ENCODE measurements at regions of chr2 and their contacts with region 1.

Region 1: GRCh38 chr2:172806493-172806892 is 70.8 kb downstream of the RAPGEF4 start:
- DNase-seq: peak; percentile 68
- ATAC-seq: peak; percentile 85
- H3K4me3 ChIP-seq: no peak overlapping the region
- H3K27ac ChIP-seq: no peak overlapping the region
- H3K4me1 ChIP-seq: no peaks in the 10 kb centered on the region
- H3K27me3 ChIP-seq: no peaks in the 10 kb centered on the region
- CTCF ChIP-seq: peak; percentile 92
- POLR2A ChIP-seq: peak; percentile 53; the same call in 1 of the 2 replicates
- RAD21 ChIP-seq: peak; percentile 96

Region 2: DNA sequence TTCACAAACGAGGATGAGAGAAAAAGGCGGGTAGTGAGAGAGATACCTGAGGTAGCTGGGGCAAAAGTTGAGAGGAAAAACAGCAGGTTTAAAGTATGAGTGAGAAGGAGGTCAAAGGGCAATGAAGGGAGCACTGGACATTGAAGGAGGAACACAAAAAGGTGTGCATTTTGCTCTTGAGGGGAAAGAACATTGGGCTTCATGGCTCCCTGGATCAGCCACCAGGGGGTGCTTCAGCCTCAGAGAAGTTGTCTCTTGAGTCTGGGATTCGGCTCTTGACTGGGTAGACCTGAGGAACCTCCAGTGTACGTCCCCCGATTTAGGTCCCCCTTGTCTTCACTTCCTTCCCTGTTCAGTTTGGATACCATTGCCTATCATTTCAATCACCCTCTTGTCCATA is 57.7 kb after region 1 on chr2:
- CTCF ChIA-PET with region 1: no interaction called
- POLR2A ChIA-PET with region 1: interaction called, 3 read pairs
- dilution Hi-C with region 1: no loop called
- in situ Hi-C with region 1: no loop called
- intact Hi-C with region 1: loop called (anchors 1 kb)
- DNase-seq: peak; percentile 51
- ATAC-seq: peak; percentile 73; the same call in 1 of the 2 replicates
- H3K4me3 ChIP-seq: no peak overlapping the region
- H3K27ac ChIP-seq: no peak overlapping the region
- H3K4me1 ChIP-seq: peaks cover 4% of the 10 kb centered on the region
- H3K27me3 ChIP-seq: no peaks in the 10 kb centered on the region
- CTCF ChIP-seq: peak; percentile 65
- POLR2A ChIP-seq: no peak
- RAD21 ChIP-seq: peak; percentile 76

Region 3: DNA sequence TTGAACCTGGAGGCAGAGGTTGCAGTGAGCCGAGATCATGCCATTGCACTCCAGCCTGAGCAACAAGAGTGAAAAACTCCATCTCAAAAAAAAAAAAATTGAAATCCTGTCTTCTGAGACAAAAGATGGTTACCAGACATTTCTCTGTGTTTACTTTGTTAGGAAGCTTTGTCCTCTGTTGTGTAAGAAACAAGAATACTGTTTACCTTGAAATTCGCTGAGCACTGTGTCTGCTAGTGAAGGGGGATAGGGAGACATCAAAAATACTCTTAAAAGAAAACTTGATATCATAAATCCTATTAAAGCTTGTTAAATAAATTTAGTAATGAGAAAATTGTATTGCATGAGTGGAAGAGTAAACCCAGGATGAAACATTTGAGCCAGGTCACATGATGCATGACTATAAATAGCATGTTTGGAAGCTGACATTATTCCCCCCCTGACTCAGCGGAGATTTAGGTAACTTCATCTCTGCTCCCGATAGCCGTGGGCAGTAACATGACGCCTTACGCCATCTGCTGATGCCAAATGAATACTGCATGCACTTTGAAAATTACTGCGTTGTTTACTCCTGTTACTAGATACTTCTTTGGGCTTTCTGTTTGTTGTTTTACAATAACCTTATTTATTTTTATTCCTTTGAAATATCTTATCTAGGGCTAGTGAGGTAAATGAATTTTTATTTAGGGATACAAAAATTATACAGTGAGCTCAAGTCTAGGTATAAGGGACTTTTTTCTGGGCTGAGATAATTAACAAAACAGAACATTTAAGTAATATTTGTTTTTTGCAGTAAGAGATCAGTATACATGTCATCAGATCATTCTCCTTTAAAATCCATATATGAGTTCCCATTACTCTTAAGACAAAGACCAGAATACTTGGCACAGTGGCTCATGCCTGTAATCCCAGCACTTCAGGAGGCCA is 404.0 kb after region 1 on chr2:
- CTCF ChIA-PET with region 1: interaction called, 4 read pairs
- POLR2A ChIA-PET with region 1: no interaction called
- dilution Hi-C with region 1: no loop called
- in situ Hi-C with region 1: loop called (anchors 5 kb)
- intact Hi-C with region 1: loop called (anchors 5 kb)
- DNase-seq: peak; percentile 97
- ATAC-seq: peak; percentile 98
- H3K4me3 ChIP-seq: no peak overlapping the region
- H3K27ac ChIP-seq: peak overlapping the region; percentile 36; the same call in 1 of the 2 replicates
- H3K4me1 ChIP-seq: peaks cover 2% of the 10 kb centered on the region; the same call in 1 of the 2 replicates
- H3K27me3 ChIP-seq: no peaks in the 10 kb centered on the region
- CTCF ChIP-seq: peak; percentile 97
- POLR2A ChIP-seq: 0 out of 2 replicates have a peak, but pooled peaks have one; percentile 30
- RAD21 ChIP-seq: peak; percentile 99

Region 4: DNA sequence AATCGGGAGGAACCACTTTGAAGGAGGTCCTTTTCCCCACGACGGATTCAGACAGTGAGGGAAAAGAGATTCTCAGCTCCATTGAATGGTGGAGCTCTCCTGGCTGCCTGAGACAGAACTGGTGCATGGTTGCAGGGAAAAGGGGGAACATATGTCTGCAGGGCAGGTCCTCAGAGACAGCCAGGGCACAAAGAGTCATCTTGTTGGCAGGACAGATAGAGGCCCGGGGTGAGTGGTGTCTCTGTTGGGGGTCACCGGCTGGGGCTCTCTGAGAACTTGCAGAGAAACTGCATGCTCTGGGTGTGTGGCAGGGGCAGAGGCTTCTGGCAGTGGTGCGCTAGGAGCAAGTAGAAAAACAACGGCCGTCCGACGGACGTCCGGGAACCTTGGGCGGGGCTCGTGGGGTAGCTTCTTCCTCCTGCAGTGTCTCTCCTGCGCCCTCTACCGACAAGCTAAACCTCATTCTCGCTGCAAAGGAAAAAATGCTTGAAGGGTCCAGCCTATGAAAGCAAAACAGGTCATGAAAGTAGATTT is 642.5 kb after region 1 on chr2:
- CTCF ChIA-PET with region 1: no interaction called
- POLR2A ChIA-PET with region 1: no interaction called
- dilution Hi-C with region 1: no loop called
- in situ Hi-C with region 1: no loop called
- intact Hi-C with region 1: loop called (anchors 5 kb)
- DNase-seq: peak; percentile 73
- ATAC-seq: peak; percentile 97
- H3K4me3 ChIP-seq: peak overlapping the region; percentile 25
- H3K27ac ChIP-seq: peak overlapping the region; percentile 13; the same call in 1 of the 2 replicates
- H3K4me1 ChIP-seq: no peaks in the 10 kb centered on the region
- H3K27me3 ChIP-seq: peaks cover 14% of the 10 kb centered on the region
- CTCF ChIP-seq: peak; percentile 79
- POLR2A ChIP-seq: no peak
- RAD21 ChIP-seq: peak; percentile 67

Measured in IMR-90 (cell line).